PC-3 (cell line): ENCODE measurements at regions of chr5 and their contacts with region 1.

Region 1: DNA sequence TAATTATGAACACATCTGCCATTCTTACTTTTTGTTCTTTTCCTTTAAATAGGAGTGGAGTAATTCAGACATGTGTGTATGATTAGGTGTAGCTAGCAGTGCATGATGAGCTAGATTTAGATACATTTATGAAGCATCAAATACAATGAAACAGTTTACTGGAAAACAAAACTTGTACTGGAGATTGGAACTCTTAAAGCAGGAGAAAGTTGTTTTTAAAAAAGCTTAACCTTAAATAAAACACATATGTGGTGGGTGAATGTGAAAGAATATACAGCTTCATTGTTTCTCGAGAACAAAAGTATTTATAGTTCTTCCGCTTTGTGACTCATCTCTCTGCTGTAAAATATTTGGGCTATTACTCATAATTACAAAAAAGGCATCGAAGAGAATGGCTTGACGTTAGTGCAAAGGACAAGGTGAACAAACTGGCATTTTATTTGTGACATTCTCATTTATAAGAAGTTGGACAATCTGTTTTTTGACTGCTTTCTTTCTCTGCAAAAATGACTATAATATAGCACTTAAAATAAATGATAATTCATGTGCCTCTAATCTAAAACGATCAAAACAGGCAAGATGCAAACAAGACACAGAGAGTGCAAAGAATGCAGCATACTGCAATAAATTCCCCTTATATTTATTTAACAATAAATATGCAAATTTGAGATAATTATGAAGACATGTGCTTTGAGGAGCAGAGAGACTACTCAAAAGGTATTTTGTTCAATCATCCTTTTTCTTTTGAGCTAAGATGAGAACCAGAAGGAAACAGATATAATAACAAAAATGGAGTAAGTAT is 478.8 kb downstream of the CETN3 start:
- DNase-seq: peak; percentile 96
- ATAC-seq: peak; percentile 94
- H3K4me3 ChIP-seq: peak overlapping the region; percentile 10; the same call in 1 of the 2 replicates
- H3K27ac ChIP-seq: peak overlapping the region; percentile 52
- H3K4me1 ChIP-seq: peaks cover 21% of the 10 kb centered on the region
- H3K27me3 ChIP-seq: no peaks in the 10 kb centered on the region
- CTCF ChIP-seq: no peak

Region 2: GRCh38 chr5:89756955-89757354 is 173.8 kb before region 1 on chr5:
- CTCF ChIA-PET with region 1: no interaction called
- POLR2A ChIA-PET with region 1: no interaction called
- intact Hi-C with region 1: loop called (anchors 2 kb)
- DNase-seq: no peak
- ATAC-seq: no peak
- H3K4me3 ChIP-seq: no peak overlapping the region
- H3K27ac ChIP-seq: no peak overlapping the region
- H3K4me1 ChIP-seq: peaks cover 14% of the 10 kb centered on the region
- H3K27me3 ChIP-seq: no peaks in the 10 kb centered on the region
- CTCF ChIP-seq: no peak

Region 3: GRCh38 chr5:89857790-89858189 is 73.0 kb before region 1 on chr5:
- CTCF ChIA-PET with region 1: no interaction called
- POLR2A ChIA-PET with region 1: no interaction called
- intact Hi-C with region 1: loop called (anchors 2 kb)
- DNase-seq: peak; percentile 93
- ATAC-seq: peak; percentile 99
- H3K4me3 ChIP-seq: peak overlapping the region; percentile 6; the same call in 1 of the 2 replicates
- H3K27ac ChIP-seq: peak overlapping the region; percentile 51
- H3K4me1 ChIP-seq: peaks cover 14% of the 10 kb centered on the region
- H3K27me3 ChIP-seq: no peaks in the 10 kb centered on the region
- CTCF ChIP-seq: no peak